Activated CD8-positive, alpha-beta memory T cell treated with anti-CD3 and anti-CD28 coated beads, Interleukin-2, amount 10 ng/mL, durations not matched to agents 7 days and 5 days (primary cell): ENCODE measurements at regions of chr1 and their contacts with region 1.

Region 1: GRCh38 chr1:28248283-28249012 is 10.9 kb upstream of the SESN2 start:
- DNase-seq: peak; percentile 91
- ATAC-seq: peak; percentile 18
- H3K4me3 Mint-ChIP-seq: peak overlapping the region; percentile 89
- H3K27ac Mint-ChIP-seq: peak overlapping the region; percentile 100
- H3K4me1 Mint-ChIP-seq: peaks cover 52% of the 10 kb centered on the region
- H3K27me3 Mint-ChIP-seq: no peaks in the 10 kb centered on the region

Region 2: GRCh38 chr1:28235755-28236655 is 12.4 kb before region 1 on chr1 and contains the start of gene ATP5IF1:
- CTCF ChIA-PET with region 1: interaction called, 28 read pairs
- DNase-seq: peak; percentile 97
- ATAC-seq: peak; percentile 97
- H3K4me3 Mint-ChIP-seq: no peak within 1 kb of the TSS
- H3K27ac Mint-ChIP-seq: no peak within 1 kb of the TSS
- H3K4me1 Mint-ChIP-seq: peaks cover 27% of the 10 kb centered on the region
- H3K27me3 Mint-ChIP-seq: no peaks in the 10 kb centered on the region
- total RNA-seq, gene ATP5IF1: 175 to 182 TPM

Region 3: DNA sequence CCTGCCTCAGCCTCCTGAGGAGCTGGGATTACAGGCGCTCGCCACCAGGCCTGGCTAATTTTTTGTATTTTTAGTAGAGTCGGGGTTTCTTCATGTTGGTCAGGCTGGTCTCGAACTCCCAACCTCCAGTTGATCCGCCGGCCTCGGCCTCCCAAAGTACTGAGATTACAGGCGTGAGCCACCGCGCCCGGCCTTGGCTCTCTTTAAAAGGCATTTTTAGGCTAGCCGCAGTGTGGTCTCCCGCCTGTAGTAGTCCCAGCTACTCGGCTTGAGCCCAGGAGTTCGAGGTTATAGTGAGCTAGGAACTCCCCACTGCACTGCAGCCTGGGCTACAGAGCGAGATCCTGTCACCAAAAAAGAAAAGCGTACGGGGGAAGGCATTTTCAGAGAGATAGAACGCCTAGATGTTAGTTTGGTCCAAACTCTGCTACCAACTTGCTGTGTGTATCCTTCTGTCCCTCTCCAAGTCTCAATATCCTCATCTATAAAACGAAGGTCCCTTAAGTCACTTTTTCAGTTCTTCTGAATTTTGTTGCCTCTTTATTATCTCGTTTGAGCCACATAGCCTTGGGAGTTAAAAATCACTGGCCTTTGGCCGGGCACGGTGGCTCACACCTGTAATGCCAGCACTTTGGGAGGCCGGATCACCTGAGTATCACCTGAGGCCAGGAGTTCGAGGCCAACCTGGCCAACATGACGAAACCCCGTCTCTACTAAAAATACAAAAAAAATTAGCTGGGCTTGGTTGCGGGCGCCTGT is 81.1 kb after region 1 on chr1:
- CTCF ChIA-PET with region 1: interaction called, 42 read pairs
- DNase-seq: no peak
- ATAC-seq: peak; percentile 15
- H3K4me3 Mint-ChIP-seq: peak overlapping the region; percentile 89
- H3K27ac Mint-ChIP-seq: peak overlapping the region; percentile 99
- H3K4me1 Mint-ChIP-seq: peaks cover 41% of the 10 kb centered on the region
- H3K27me3 Mint-ChIP-seq: no peaks in the 10 kb centered on the region

Region 4: DNA sequence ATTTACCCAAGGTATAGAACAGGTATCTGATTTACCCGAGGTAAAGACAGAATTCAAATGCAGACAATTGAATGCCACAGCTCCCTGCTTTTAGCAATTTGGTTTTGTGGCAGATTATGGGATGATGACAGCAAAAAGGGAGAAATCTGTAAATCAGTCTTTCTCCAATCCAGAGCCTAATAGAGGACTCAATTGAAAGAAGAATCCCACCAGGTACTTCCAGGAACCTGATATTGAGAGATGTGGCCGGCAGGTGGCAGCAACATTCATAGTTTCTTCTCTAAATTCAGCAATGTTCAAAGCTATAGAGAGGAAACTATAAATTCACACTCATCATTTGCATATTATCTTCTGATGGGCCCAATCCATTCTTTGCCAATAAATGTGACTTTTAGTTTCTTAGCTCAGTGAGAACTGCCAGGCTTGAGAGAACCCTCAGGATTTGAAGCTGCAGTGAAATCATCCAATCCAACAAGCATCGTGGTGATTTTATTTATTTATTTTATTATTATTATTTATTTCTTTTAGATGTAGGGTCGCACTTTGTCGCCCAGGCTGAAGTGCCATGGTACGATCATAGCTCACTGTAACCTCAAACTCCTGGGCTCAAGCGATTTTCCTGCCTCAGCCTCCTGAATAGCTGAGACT is 111.3 kb after region 1 on chr1:
- CTCF ChIA-PET with region 1: interaction called, 29 read pairs
- DNase-seq: peak; percentile 85
- ATAC-seq: peak; percentile 74
- H3K4me3 Mint-ChIP-seq: no peak overlapping the region
- H3K27ac Mint-ChIP-seq: no peak overlapping the region
- H3K4me1 Mint-ChIP-seq: peaks cover 10% of the 10 kb centered on the region
- H3K27me3 Mint-ChIP-seq: peaks cover 3% of the 10 kb centered on the region

Region 5: DNA sequence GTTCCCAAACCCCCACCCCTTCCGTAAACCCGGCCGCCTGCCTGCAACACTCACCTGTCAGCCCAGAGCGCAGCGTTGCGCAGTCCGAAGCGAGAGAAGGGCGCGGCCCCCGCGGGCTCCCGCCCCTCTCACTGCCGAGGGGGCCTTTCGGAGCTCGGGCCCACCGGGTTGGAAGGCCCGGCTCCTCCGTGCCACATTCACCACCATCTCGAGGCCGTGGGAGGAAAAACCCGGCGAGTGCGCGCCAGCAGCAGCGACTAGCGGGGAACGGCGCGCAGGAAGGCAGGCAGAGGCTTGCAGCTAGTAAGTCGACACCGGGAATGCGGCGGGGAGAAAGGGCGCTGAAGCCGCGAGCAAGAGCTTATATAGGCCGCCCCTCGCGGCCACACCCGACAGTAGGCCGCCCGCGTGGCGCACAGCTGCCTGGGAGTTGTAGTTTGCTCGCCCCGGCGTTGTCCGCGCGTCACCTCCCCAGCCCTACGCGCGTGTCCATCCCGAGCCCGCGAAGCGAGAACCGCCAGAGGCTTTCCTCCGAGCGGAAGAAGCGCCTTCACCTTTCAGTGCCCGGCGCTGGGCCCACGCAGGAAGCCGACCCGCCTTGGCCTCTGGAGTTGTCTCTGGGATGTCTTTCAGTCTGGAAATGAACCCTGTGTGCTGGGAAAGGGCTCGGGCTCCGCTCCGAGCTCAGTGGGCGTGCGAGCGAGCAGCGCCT is 333.2 kb after region 1 on chr1:
- CTCF ChIA-PET with region 1: interaction called, 10 read pairs
- DNase-seq: peak; percentile 96
- ATAC-seq: peak; percentile 89
- H3K4me3 Mint-ChIP-seq: peak overlapping the region; percentile 85
- H3K27ac Mint-ChIP-seq: peak overlapping the region; percentile 89
- H3K4me1 Mint-ChIP-seq: peaks cover 29% of the 10 kb centered on the region
- H3K27me3 Mint-ChIP-seq: no peaks in the 10 kb centered on the region